ENCODE measurements at regions of chr2 and their contacts with region 1.

Region 1: DNA sequence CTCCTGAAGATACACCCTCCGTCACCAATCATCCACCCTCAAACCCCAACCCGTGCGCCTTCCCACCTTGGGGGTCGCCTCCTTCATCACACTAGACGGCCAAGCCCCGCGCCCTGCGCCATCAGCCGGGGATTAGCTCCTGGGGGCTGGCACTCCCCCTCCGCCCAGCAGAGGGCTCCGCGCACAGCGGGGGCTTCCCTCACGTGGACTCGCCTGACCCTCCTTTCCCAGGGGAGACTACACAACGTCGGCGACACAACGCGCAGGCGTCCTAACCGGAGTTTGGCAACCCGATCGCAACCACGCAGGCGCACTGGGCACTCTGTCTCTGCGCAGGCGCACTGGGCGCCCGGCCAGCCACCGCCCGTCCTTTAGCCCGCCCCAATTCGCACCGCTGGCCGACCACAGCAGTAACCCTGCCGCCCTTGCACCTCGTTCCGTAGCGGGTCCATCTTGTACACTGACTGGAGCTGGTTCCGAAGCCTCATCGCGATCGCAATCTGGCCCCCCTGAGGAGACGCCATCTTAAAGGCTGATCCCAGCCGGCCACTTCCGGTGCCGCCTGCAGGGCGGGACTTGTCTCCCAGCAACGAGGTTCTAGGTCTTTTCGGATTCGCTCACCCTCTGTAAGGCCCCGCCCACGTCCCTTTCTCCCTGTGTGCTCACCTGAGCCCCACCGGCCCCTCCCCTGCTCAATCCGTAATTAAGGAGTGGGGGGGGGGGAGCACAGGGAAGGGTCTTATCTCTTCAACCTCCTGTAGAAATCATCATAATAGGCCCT is at the start of gene PCGF1:
- DNase-seq: peak; percentile 99
- ATAC-seq: peak; percentile 85
- H3K4me3 Mint-ChIP-seq: peak within 1 kb of the TSS; percentile 96
- H3K27ac Mint-ChIP-seq: peak within 1 kb of the TSS; percentile 100
- H3K4me1 Mint-ChIP-seq: peaks cover 52% of the 10 kb centered on the region
- H3K27me3 Mint-ChIP-seq: peaks cover 24% of the 10 kb centered on the region
- CTCF ChIP-seq: no peak
- total RNA-seq, gene PCGF1: 29.3 and 34.7 TPM in 2 replicates

Region 2: GRCh38 chr2:74421221-74421870 is 86.0 kb before region 1 on chr2 and contains the starts of genes C2orf81 and WDR54:
- CTCF ChIA-PET with region 1: no interaction called
- POLR2A ChIA-PET with region 1: no interaction called
- intact Hi-C with region 1: loop called (anchors 1 kb)
- DNase-seq: peak; percentile 97
- ATAC-seq: peak; percentile 88
- H3K4me3 Mint-ChIP-seq: peak within 1 kb of the TSS; percentile 99
- H3K27ac Mint-ChIP-seq: peak within 1 kb of the TSS; percentile 96
- H3K4me1 Mint-ChIP-seq: peaks cover 44% of the 10 kb centered on the region
- H3K27me3 Mint-ChIP-seq: no peaks in the 10 kb centered on the region
- CTCF ChIP-seq: no peak
- total RNA-seq, gene C2orf81: 3.9 and 5.5 TPM in 2 replicates
- total RNA-seq, gene WDR54: 32.3 and 33.5 TPM in 2 replicates

Region 3: DNA sequence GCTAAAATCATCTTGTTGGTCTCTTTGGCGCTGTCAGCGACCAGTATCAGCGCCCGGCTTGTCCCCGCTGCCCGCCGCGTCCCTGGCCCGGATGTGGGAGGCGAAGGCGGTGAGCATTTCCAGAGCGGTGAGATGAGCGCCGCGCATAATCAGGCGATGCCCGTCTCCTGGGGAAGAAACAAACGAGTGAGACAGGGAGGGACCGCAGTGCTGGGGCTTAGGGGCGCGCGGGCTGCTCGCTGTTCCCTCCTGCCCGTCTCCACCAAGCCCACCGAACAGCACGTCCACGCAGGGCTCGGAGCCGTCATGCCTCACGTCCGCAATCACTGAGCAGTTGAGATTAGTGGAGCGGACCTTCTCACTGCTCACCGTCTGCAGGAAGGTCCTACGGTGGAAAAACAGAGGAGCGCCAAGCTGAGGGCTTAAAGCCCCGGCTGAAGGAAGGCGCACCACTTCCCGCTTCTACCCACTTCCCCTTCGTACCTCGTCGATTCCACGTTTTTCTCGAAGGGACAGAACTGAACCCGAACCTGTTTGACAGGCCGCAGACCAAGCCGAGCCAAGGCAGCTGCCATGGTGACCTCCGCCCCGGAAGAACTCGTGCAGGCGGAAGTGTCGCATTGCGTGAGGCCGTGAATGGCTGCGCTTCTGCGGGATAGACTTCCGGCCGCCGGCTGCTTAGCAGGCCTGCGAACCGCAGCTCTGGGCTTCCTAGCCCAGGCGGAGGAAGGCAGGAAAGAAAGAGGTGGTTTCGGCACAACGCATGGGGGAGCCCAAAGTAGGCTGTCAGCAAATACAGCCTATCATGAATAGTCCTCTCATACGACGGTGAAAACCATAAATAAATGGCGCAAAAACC is 35.0 kb before region 1 on chr2 and contains the start of gene MRPL53:
- CTCF ChIA-PET with region 1: interaction called, 3 read pairs
- POLR2A ChIA-PET with region 1: interaction called, 11 read pairs
- intact Hi-C with region 1: no loop called
- DNase-seq: peak; percentile 91
- ATAC-seq: peak; percentile 89
- H3K4me3 Mint-ChIP-seq: peak within 1 kb of the TSS; percentile 97
- H3K27ac Mint-ChIP-seq: peak within 1 kb of the TSS; percentile 97
- H3K4me1 Mint-ChIP-seq: peaks cover 23% of the 10 kb centered on the region
- H3K27me3 Mint-ChIP-seq: no peaks in the 10 kb centered on the region
- CTCF ChIP-seq: no peak
- total RNA-seq, gene MRPL53: 86.9 and 98.8 TPM in 2 replicates

Region 4: DNA sequence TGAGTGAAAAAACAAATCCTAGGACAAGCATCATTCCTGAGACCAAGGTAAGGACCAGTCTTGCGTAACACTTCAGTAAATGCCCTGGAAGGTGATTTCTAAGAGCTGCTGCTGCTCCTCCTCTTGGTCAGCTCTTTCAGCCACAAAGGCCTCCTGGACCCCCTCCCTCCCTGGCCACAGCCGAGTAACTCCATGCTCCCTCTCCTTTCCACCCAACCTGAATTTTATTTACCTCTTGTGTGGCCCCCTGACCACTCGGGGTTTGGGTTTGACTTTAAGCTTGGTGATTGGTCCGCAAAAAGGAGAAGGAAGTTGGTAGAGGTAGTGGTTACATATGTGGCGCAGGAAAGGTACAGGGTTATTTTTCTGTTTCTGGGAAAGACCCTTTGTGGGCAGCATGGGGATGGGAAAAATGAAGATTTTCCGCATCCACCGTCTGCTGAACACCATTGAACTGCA is 31.6 kb after region 1 on chr2:
- CTCF ChIA-PET with region 1: interaction called, 5 read pairs
- POLR2A ChIA-PET with region 1: interaction called, 10 read pairs
- intact Hi-C with region 1: no loop called
- DNase-seq: no peak
- ATAC-seq: peak; percentile 77
- H3K4me3 Mint-ChIP-seq: peak overlapping the region; percentile 81
- H3K27ac Mint-ChIP-seq: peak overlapping the region; percentile 89
- H3K4me1 Mint-ChIP-seq: peaks cover 31% of the 10 kb centered on the region
- H3K27me3 Mint-ChIP-seq: no peaks in the 10 kb centered on the region
- CTCF ChIP-seq: no peak

Region 5: GRCh38 chr2:74587664-74588277 is 80.4 kb after region 1 on chr2:
- CTCF ChIA-PET with region 1: interaction called, 30 read pairs
- POLR2A ChIA-PET with region 1: interaction called, 7 read pairs
- intact Hi-C with region 1: loop called (anchors 1 kb)
- DNase-seq: peak; percentile 43
- ATAC-seq: peak; percentile 96
- H3K4me3 Mint-ChIP-seq: no peak overlapping the region
- H3K27ac Mint-ChIP-seq: no peak overlapping the region
- H3K4me1 Mint-ChIP-seq: peaks cover 8% of the 10 kb centered on the region
- H3K27me3 Mint-ChIP-seq: peaks cover 4% of the 10 kb centered on the region
- CTCF ChIP-seq: no peak

Region 6: GRCh38 chr2:74653985-74654882 is 146.9 kb after region 1 on chr2 and contains the start of gene SEMA4F:
- CTCF ChIA-PET with region 1: no interaction called
- POLR2A ChIA-PET with region 1: no interaction called
- intact Hi-C with region 1: loop called (anchors 10 kb)
- DNase-seq: peak; percentile 92
- ATAC-seq: peak; percentile 99
- H3K4me3 Mint-ChIP-seq: peak within 1 kb of the TSS; percentile 91
- H3K27ac Mint-ChIP-seq: peak within 1 kb of the TSS; percentile 82
- H3K4me1 Mint-ChIP-seq: peaks cover 16% of the 10 kb centered on the region
- H3K27me3 Mint-ChIP-seq: peaks cover 9% of the 10 kb centered on the region
- CTCF ChIP-seq: no peak
- total RNA-seq, gene SEMA4F: 10.2 and 11.6 TPM in 2 replicates

Region 7: DNA sequence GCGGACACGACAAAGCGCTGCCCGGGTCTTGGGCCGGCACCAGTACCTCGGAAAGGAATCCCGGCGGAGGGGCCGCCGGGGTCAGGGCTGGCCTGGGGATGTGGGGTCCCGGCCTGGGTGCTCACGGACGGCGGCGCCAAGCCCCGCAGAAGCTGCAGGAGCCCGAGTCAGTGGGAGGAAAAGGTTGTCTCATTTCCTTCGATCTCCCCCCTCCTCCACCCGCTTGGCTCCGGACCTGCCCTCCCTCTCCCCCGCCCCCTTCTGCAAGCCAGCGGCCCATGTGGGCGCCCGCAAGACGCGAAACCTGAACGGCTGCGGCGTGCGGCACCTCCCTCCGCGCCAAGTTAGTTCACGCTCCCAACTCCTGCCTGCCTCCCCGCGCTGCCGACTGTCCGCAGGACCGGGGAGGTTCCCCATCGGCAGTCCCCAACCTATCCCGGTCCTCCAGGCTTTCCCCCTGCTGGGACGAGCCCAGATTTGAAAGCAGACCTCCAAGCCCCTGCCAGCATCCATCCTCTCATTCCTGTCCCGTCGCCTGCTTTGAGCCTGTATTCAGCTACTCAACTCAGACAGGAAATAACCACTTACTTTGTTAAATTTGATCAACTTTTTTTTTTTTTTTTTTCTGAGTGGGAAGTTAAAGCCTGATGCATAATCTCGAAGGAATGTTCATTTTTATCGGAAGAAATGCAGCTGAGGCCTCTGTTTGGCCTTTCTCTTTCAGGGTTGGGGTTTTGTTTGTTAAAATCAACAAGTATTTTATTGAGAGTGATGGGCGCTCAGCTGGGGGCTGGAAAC is 1053.6 kb after region 1 on chr2 and contains the start of gene EVA1A:
- CTCF ChIA-PET with region 1: no interaction called
- POLR2A ChIA-PET with region 1: no interaction called
- intact Hi-C with region 1: no loop called
- DNase-seq: no peak
- ATAC-seq: no peak
- H3K4me3 Mint-ChIP-seq: peak within 1 kb of the TSS; percentile 76
- H3K27ac Mint-ChIP-seq: no peak within 1 kb of the TSS
- H3K4me1 Mint-ChIP-seq: peaks cover 12% of the 10 kb centered on the region
- H3K27me3 Mint-ChIP-seq: peaks cover 32% of the 10 kb centered on the region
- CTCF ChIP-seq: no peak
- total RNA-seq, gene EVA1A: not detected in 2 replicates

Measured in activated B cell treated with CpG ODN at 0.5 μM for 24 hours (primary cell).